ENCODE measurements at regions of chr17 and their contacts with region 1.

Region 1: GRCh38 chr17:29369831-29370735 is 20.1 kb upstream of the TAOK1 start:
- DNase-seq: no peak
- ATAC-seq: peak; percentile 92

Region 2: DNA sequence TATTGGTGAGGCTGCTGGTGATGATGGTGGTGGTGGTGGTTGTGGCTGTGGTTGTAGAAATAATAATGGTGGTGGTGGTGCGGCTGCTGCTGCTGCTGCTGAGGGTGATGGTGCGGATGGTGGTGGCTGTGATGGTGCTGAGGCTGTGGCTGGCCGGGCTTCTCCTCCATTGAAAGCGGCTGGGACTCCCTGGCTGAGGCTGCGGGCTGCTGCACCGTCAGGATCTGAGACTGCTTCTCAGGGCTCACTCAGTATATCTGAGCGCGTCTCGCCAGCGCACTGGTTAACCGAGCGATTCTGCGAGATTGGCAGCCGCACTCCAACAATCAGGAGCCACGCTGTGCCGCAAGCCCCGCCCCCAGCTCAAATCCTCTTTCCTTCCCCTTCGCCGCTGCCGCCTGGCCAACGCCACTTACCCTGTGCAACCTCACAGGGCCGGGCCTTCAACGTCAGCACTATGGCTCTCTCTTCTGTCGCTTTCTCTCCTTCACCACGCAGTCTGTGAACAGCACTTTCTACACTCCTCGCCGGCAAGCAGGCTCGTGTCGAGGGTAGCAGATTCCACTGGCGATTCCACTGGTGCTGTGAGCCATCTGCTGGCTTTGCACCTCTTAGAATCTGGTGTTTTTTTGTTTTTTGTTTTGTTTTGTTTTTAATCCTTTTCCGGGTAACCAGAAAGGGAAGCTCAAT is 76.0 kb before region 1 on chr17 and contains the start of gene NUFIP2:
- intact Hi-C with region 1: loop called (anchors 2 kb)
- DNase-seq: peak; percentile 100
- ATAC-seq: peak; percentile 97
- total RNA-seq, gene NUFIP2: 42.3 TPM

Region 3: GRCh38 chr17:29533976-29534375 is 163.9 kb after region 1 on chr17:
- intact Hi-C with region 1: loop called (anchors 2 kb)
- DNase-seq: no peak
- ATAC-seq: no peak

Measured in Right ventricle myocardium inferior (tissue), 1 donor.